Activated T-helper 2 cell treated with anti-CD3 and anti-CD28 coated beads, Interferon-gamma antibody, Interleukin-2, Interleukin-4, amounts not matched to agents 10 μg/mL and 5 μg/mL and 100 μg/mL, durations not matched to agents 14 hours and 24 hours and 36 hours (primary cell): ENCODE measurements at regions of chr4 and their contacts with region 1.

Region 1: GRCh38 chr4:74397748-74398426 is 32.9 kb downstream of the EREG start:
- DNase-seq: no peak
- H3K4me3 Mint-ChIP-seq: peak overlapping the region; percentile 92
- H3K27ac Mint-ChIP-seq: peak overlapping the region; percentile 86
- H3K4me1 Mint-ChIP-seq: peaks cover 7% of the 10 kb centered on the region
- H3K27me3 Mint-ChIP-seq: peaks cover 5% of the 10 kb centered on the region

Region 2: DNA sequence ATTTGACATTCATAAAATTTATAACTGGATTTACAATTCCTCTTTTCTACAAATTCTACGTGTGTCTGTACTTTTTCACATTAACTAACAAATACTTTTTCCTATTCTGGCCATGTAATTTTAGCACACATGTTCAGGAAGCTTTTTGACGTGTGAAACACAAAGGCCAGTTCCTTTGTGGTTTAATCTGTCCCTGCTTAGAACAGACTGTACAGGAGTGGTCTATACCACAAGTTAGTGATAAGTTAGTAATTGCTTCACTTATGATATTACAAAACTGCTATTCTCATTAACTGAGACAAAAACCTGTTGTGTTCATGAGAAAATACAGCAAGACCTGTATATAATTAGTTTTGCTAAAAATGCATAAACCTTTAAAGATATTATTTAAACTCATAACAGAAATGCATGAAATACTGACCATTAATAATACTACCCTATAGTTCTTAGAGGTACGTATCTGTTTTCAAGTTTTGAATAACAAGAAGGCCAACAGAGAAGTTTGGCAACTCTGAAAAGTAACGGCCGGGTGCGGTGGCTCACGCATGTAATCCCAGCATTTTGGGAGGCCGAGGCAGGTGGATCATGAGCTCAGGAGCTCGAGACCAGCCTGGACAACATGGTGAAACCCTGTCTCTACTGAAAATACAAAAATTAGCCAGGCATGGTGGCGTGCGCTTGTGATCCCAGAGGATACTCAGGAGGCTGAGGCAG is 33.4 kb after region 1 on chr4:
- intact Hi-C with region 1: loop called (anchors 5 kb)
- DNase-seq: no peak
- H3K4me3 Mint-ChIP-seq: no peak overlapping the region
- H3K27ac Mint-ChIP-seq: no peak overlapping the region
- H3K4me1 Mint-ChIP-seq: no peaks in the 10 kb centered on the region
- H3K27me3 Mint-ChIP-seq: peaks cover 5% of the 10 kb centered on the region